Aorta (tissue), 5 donors: ENCODE measurements at regions of chrX and their contacts with region 1.

Region 1: GRCh38 chrX:19887911-19888879 is 795 bp upstream of the SH3KBP1 start:
- DNase-seq: peak; percentile 59 to 78
- ATAC-seq: peak; percentile 80
- H3K4me3 ChIP-seq: peak overlapping the region; percentile 57 to 93
- H3K27ac ChIP-seq: peak overlapping the region in 1 of 2 donors; percentile 10
- H3K4me1 ChIP-seq: no peaks in the 10 kb centered on the region
- H3K27me3 ChIP-seq: no peaks in the 10 kb centered on the region

Region 2: GRCh38 chrX:19372170-19372546 is 516.0 kb before region 1 on chrX:
- intact Hi-C with region 1: loop called in 1 of 2 experiments (anchors 5 kb)
- DNase-seq: peak; percentile 68 to 86
- ATAC-seq: peak; percentile 59
- H3K4me3 ChIP-seq: peak overlapping the region in 1 of 2 donors; percentile 1
- H3K27ac ChIP-seq: no peak overlapping the region
- H3K4me1 ChIP-seq: no peaks in the 10 kb centered on the region
- H3K27me3 ChIP-seq: no peaks in the 10 kb centered on the region

Region 3: GRCh38 chrX:19544693-19545305 is 343.4 kb before region 1 on chrX:
- intact Hi-C with region 1: loop called in 1 of 2 experiments (anchors 5 kb)
- DNase-seq: no peak
- ATAC-seq: no peak
- H3K4me3 ChIP-seq: no peak overlapping the region
- H3K27ac ChIP-seq: no peak overlapping the region
- H3K4me1 ChIP-seq: no peaks in the 10 kb centered on the region
- H3K27me3 ChIP-seq: no peaks in the 10 kb centered on the region

Region 4: GRCh38 chrX:19593690-19594089 is 294.5 kb before region 1 on chrX:
- intact Hi-C with region 1: loop called (anchors 2 to 10 kb)
- DNase-seq: no peak
- ATAC-seq: peak; percentile 42
- H3K4me3 ChIP-seq: no peak overlapping the region
- H3K27ac ChIP-seq: no peak overlapping the region
- H3K4me1 ChIP-seq: no peaks in the 10 kb centered on the region
- H3K27me3 ChIP-seq: no peaks in the 10 kb centered on the region

Region 5: GRCh38 chrX:19739683-19740082 is 148.5 kb before region 1 on chrX:
- intact Hi-C with region 1: loop called (anchors 5 to 10 kb)
- DNase-seq: peak; percentile 69 to 79
- ATAC-seq: peak; percentile 71
- H3K4me3 ChIP-seq: no peak overlapping the region
- H3K27ac ChIP-seq: no peak overlapping the region
- H3K4me1 ChIP-seq: no peaks in the 10 kb centered on the region
- H3K27me3 ChIP-seq: no peaks in the 10 kb centered on the region

Region 6: GRCh38 chrX:19799319-19800182 is 88.6 kb before region 1 on chrX:
- intact Hi-C with region 1: no loop called
- DNase-seq: no peak
- ATAC-seq: peak; percentile 42
- H3K4me3 ChIP-seq: no peak overlapping the region
- H3K27ac ChIP-seq: no peak overlapping the region
- H3K4me1 ChIP-seq: no peaks in the 10 kb centered on the region
- H3K27me3 ChIP-seq: no peaks in the 10 kb centered on the region